Activated CD4-positive, alpha-beta memory T cell treated with anti-CD3 and anti-CD28 coated beads, Interleukin-2, amount 10 ng/mL, durations not matched to agents 7 days and 5 days (primary cell): ENCODE measurements at regions of chr4 and their contacts with region 1.

Region 1: GRCh38 chr4:147969573-147970385 is 237.9 kb downstream of the ARHGAP10 start:
- DNase-seq: no peak
- H3K4me3 Mint-ChIP-seq: no peak overlapping the region
- H3K27ac Mint-ChIP-seq: no peak overlapping the region
- H3K4me1 Mint-ChIP-seq: no peaks in the 10 kb centered on the region
- H3K27me3 Mint-ChIP-seq: no peaks in the 10 kb centered on the region

Region 2: GRCh38 chr4:147944249-147944648 is 25.5 kb before region 1 on chr4:
- CTCF ChIA-PET with region 1: no interaction called
- POLR2A ChIA-PET with region 1: no interaction called
- DNase-seq: no peak
- H3K4me3 Mint-ChIP-seq: peak overlapping the region; percentile 15
- H3K27ac Mint-ChIP-seq: peak overlapping the region; percentile 52
- H3K4me1 Mint-ChIP-seq: peaks cover 33% of the 10 kb centered on the region
- H3K27me3 Mint-ChIP-seq: no peaks in the 10 kb centered on the region

Region 3: GRCh38 chr4:147984065-147984777 is 14.4 kb after region 1 on chr4:
- CTCF ChIA-PET with region 1: interaction called, 10 read pairs
- POLR2A ChIA-PET with region 1: no interaction called
- DNase-seq: peak; percentile 27
- H3K4me3 Mint-ChIP-seq: no peak overlapping the region
- H3K27ac Mint-ChIP-seq: no peak overlapping the region
- H3K4me1 Mint-ChIP-seq: peaks cover 28% of the 10 kb centered on the region
- H3K27me3 Mint-ChIP-seq: no peaks in the 10 kb centered on the region

Region 4: DNA sequence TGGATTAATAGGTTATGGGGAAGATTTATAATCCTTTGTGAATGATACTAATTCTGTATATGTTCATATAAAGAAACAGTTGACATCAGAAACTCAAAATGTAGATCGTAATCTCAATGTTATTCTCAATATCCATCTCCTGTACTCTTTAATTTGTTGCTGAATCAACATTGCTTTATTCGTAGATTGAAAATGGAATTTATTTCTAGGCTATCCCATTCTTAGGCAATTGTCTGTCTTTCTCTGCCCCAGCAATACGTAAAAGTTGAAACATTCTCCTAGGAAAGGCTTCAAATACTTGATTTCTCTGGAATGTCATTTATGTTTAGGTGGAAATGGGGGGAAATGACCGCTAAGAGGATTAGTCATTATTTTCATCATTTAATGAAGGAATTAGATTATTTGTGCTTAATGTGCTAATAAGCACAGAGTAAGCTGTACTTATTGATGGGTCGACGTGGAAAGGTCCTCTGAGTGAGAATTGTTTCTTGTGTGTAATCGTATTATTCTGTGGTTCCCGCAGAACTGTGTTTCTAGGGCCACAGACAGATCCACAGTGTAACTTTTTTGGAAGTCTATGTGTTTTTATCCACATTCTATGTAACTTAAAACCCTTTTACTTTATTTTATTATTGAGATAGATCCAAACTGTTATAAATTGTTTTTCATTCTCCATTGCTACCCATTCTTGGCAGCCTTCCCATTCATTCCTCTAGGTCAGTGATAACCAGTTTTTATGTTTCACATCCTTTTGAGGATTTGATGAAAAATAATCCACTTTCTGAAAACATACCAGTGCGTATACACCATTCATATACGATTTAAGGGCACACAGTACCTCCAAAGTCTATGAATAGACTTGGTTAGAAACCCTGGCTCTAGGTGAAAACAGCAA is 25.0 kb after region 1 on chr4:
- CTCF ChIA-PET with region 1: no interaction called
- POLR2A ChIA-PET with region 1: no interaction called
- DNase-seq: no peak
- H3K4me3 Mint-ChIP-seq: no peak overlapping the region
- H3K27ac Mint-ChIP-seq: no peak overlapping the region
- H3K4me1 Mint-ChIP-seq: no peaks in the 10 kb centered on the region
- H3K27me3 Mint-ChIP-seq: no peaks in the 10 kb centered on the region

Region 5: DNA sequence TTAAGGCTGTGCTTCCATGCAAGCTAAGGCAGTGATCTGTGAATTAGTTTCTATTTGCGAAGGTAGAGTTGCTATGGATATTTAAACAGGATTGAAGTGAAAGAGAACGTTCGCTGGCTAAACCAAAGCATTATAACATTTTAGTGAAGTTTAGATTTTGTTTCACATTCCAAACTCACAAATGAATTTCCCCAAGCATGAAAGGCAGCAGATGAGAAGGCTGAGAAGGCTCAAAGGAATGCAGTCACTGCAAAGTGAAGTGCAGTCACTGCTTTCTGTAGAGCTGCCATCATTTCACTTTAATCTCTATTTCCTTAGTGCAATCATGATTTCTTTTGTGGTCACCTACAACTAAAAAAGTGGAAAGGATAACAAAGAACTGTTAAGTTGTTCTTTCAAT is 807.2 kb after region 1 on chr4:
- CTCF ChIA-PET with region 1: no interaction called
- POLR2A ChIA-PET with region 1: no interaction called
- DNase-seq: no peak
- H3K4me3 Mint-ChIP-seq: no peak overlapping the region
- H3K27ac Mint-ChIP-seq: no peak overlapping the region
- H3K4me1 Mint-ChIP-seq: no peaks in the 10 kb centered on the region
- H3K27me3 Mint-ChIP-seq: no peaks in the 10 kb centered on the region